BJ (cell line): ENCODE measurements at regions of chr2 and their contacts with region 1.

Region 1: GRCh38 chr2:75007819-75008218 is 49.4 kb downstream of the POLE4 start:
- DNase-seq: no peak
- H3K4me3 ChIP-seq: no peak overlapping the region
- H3K27me3 ChIP-seq: no peaks in the 10 kb centered on the region
- CTCF ChIP-seq: no peak

Region 2: DNA sequence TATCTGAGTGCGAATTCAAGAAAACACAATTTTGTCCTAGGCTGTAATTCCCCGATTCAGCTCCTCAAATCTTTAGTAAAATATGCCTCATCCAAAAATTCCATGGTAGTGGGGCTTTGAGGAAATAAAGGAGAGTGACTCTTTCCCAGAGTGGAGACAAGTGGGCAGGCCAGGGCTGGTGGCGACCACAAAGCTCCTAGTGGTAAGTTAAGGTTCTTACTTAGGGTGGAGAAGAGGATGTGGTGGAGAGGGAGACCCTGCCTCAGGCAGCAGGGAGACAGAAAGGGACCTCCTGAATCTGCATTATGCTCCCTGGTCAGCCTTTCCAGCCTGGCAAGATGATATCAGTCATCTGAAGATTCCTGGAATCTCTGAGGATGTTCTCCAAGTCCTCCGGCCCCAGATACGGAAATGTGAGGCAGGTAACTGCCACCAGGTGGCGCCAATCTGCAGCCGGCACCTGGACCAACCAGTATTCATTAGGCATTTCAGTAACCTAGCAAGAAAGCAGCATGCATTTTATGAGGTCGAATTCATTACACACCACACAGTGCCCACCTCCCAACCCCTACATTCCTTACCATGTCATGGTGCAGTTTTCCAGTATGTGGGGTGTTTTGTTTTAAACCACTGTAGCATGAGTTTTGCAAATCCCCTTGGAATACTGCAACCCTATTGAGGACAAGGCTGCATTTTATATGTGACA is 57.0 kb after region 1 on chr2:
- CTCF ChIA-PET with region 1: no interaction called
- POLR2A ChIA-PET with region 1: no interaction called
- DNase-seq: no peak
- H3K4me3 ChIP-seq: no peak overlapping the region
- H3K27me3 ChIP-seq: no peaks in the 10 kb centered on the region
- CTCF ChIP-seq: peak; percentile 84

Region 3: GRCh38 chr2:75076088-75076487 is 68.3 kb after region 1 on chr2:
- CTCF ChIA-PET with region 1: no interaction called
- POLR2A ChIA-PET with region 1: no interaction called
- DNase-seq: no peak
- H3K4me3 ChIP-seq: no peak overlapping the region
- H3K27me3 ChIP-seq: no peaks in the 10 kb centered on the region
- CTCF ChIP-seq: no peak

Region 4: GRCh38 chr2:75146606-75147332 is 138.9 kb after region 1 on chr2:
- CTCF ChIA-PET with region 1: no interaction called
- POLR2A ChIA-PET with region 1: interaction called, 16 read pairs
- DNase-seq: no peak
- H3K4me3 ChIP-seq: no peak overlapping the region
- H3K27me3 ChIP-seq: no peaks in the 10 kb centered on the region; the same call in 1 of the 2 replicates
- CTCF ChIP-seq: no peak